Naive thymus-derived CD4-positive, alpha-beta T cell (primary cell): ENCODE measurements at regions of chr2 and their contacts with region 1.

Region 1: DNA sequence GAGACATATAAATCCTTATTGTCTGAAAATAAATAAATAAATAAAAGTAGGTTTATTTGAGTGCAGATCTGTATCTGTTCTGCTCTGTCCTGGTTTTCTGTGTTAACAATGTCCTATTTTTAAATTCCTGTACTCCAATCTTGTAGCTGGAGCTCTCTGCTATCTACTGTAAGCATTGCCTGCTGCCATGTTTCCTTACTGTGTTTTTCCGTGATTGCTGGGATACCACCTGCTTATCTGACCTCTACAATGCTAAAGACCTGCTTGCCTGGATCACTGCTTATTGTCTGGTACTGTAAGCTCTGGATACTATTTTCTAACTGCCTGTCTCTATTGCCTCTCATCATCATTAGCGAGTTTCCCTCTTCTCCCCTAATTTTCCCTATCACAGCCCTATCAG is 11.6 kb downstream of the PTPN4 start:
- DNase-seq: no peak
- ATAC-seq: no peak
- H3K4me3 ChIP-seq: no peak overlapping the region
- H3K4me3 Mint-ChIP-seq: peak overlapping the region in 5 of 10 donors; percentile 22 to 55 (median 47)
- H3K27ac ChIP-seq: no peak overlapping the region
- H3K27ac Mint-ChIP-seq: peak overlapping the region in 7 of 9 donors; percentile 2 to 92 (median 8)
- H3K4me1 ChIP-seq: peaks cover 9 to 46% of the 10 kb centered on the region in 2 donors
- H3K4me1 Mint-ChIP-seq: peaks cover 12 to 56% (median 43%) of the 10 kb centered on the region in 7 donors
- H3K27me3 ChIP-seq: no peaks in the 10 kb centered on the region
- H3K27me3 Mint-ChIP-seq: no peaks in the 10 kb centered on the region

Region 2: GRCh38 chr2:119788752-119789151 is 17.4 kb after region 1 on chr2:
- CTCF ChIA-PET with region 1: interaction called, 3 read pairs
- POLR2A ChIA-PET with region 1: no interaction called
- intact Hi-C with region 1: loop called in 1 of 2 experiments (anchors 2 kb)
- DNase-seq: no peak
- ATAC-seq: no peak
- H3K4me3 ChIP-seq: no peak overlapping the region
- H3K4me3 Mint-ChIP-seq: no peak overlapping the region
- H3K27ac ChIP-seq: no peak overlapping the region
- H3K27ac Mint-ChIP-seq: no peak overlapping the region
- H3K4me1 ChIP-seq: peaks cover 0 to 5% of the 10 kb centered on the region in 2 donors
- H3K4me1 Mint-ChIP-seq: peaks cover 2 to 60% (median 36%) of the 10 kb centered on the region in 7 donors
- H3K27me3 ChIP-seq: no peaks in the 10 kb centered on the region
- H3K27me3 Mint-ChIP-seq: no peaks in the 10 kb centered on the region